Activated CD4-positive, alpha-beta T cell treated with anti-CD3 and anti-CD28 coated beads for 36 hours (primary cell): ENCODE measurements at regions of chr1 and their contacts with region 1.

Region 1: GRCh38 chr1:10941891-10942541 is 70.4 kb upstream of the TARDBP start:
- DNase-seq: peak; percentile 77
- ATAC-seq: no peak
- H3K4me3 Mint-ChIP-seq: no peak overlapping the region
- H3K27ac Mint-ChIP-seq: no peak overlapping the region
- H3K4me1 Mint-ChIP-seq: peaks cover 34% of the 10 kb centered on the region
- H3K27me3 Mint-ChIP-seq: peaks cover 53% of the 10 kb centered on the region

Region 2: DNA sequence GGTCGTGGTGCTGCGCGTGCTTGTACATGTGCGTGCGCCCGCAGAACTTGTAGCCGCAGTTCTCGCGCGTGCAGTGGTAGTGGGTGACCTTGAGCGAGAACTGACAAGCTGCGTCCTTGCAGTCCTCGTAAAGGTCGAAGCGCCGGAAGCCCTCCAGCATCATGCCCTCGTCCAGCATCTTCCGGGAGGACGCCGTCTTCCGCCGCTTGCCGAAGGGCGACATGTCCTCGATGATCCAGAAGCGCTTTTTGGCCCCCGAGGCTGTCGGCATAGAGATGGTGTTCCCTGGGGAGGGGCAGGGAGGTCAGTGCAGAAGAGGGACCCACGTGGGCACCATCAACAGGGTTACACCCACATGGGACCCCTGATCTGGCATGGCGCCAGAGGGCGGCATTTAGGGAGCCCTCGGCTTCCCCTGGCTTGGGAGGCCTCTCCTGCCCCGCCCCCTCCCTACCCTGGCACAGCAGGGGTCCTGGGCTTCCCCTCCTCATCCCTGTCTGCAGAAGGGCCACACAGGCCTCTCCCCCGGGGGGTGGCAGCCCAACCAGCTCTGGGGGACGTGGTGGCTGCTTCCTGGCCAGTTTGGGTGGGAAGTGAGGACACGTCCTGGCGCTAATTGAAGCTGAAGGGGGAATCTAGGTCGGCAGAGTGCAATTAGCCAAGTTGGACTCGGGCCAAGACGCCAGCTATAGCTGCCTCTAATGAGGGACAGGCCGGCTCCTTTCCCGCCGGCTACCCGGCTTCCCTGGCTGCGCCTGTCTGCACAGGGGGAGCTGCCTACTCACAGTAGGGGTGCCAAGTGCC is 302.0 kb before region 1 on chr1:
- CTCF ChIA-PET with region 1: no interaction called
- POLR2A ChIA-PET with region 1: no interaction called
- intact Hi-C with region 1: loop called in 1 of 2 experiments (anchors 2 kb)
- DNase-seq: no peak
- ATAC-seq: no peak
- H3K4me3 Mint-ChIP-seq: no peak overlapping the region
- H3K27ac Mint-ChIP-seq: no peak overlapping the region
- H3K4me1 Mint-ChIP-seq: peaks cover 1% of the 10 kb centered on the region
- H3K27me3 Mint-ChIP-seq: peaks cover 2% of the 10 kb centered on the region

Region 3: DNA sequence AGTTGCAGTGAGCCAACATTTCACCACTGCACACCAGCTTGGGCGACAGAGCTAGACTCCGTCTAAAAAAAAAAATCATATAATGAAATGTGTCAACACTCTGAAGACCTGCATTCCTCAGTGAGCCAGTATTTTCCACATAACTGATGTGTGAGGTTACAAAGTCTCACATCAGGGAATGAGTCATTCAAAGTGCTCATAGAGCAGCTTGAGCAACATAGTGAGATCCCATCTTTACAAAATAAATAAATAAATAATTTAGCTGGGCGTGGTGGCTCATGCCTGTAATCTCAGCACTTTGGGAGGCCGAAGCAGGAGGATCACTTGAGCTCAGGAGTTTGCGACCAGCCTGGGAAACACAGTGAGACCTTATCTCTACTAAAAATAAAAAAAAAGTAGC is 211.0 kb before region 1 on chr1:
- CTCF ChIA-PET with region 1: no interaction called
- POLR2A ChIA-PET with region 1: no interaction called
- intact Hi-C with region 1: loop called in 1 of 2 experiments (anchors 1 kb)
- DNase-seq: peak; percentile 29
- ATAC-seq: peak; percentile 63
- H3K4me3 Mint-ChIP-seq: no peak overlapping the region
- H3K27ac Mint-ChIP-seq: no peak overlapping the region
- H3K4me1 Mint-ChIP-seq: peaks cover 20% of the 10 kb centered on the region
- H3K27me3 Mint-ChIP-seq: no peaks in the 10 kb centered on the region

Region 4: GRCh38 chr1:10867138-10867721 is 74.8 kb before region 1 on chr1:
- CTCF ChIA-PET with region 1: no interaction called
- POLR2A ChIA-PET with region 1: no interaction called
- intact Hi-C with region 1: loop called in 1 of 2 experiments (anchors 1 kb)
- DNase-seq: peak; percentile 77
- ATAC-seq: peak; percentile 84
- H3K4me3 Mint-ChIP-seq: peak overlapping the region; percentile 43
- H3K27ac Mint-ChIP-seq: no peak overlapping the region
- H3K4me1 Mint-ChIP-seq: peaks cover 12% of the 10 kb centered on the region
- H3K27me3 Mint-ChIP-seq: peaks cover 51% of the 10 kb centered on the region

Region 5: DNA sequence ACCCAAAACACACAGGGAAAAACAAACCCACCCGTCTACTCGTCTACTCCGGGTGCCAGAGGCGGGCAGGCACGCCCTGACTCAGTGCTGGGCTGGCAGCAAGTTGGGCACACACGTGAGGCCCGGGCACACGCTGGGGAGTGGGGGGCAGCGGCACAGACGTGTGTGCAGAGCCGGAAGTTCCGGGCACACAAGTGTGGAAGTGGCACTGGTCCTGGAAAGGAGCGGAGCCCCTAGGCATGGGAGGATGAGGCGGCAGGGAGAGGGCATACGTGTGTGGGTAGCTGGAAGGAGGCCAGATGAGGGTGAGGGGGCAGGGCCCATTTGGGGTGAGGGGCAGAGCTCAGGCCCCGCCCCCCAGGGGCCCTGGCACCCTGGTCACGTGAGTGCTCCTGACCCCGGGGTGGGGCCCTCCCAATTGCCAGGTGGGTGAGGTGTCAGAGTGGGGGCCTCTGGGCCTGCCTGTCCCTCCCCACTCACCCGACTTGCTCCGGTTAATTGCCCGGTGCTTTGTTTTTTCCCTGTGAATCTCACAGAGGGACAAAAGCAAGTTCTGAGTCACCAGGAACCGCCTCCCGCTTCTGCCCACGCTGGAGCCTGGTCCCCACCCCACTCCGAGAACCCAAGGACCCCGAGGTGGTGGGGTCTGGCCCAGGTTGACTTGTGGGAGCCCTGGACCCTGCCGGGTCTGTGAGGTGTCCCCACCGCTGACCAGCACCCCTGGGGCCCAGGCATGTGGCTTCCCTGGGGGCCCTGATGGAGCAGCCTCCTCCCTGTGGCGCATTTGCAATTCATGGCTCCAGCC is 40.7 kb before region 1 on chr1:
- CTCF ChIA-PET with region 1: no interaction called
- POLR2A ChIA-PET with region 1: no interaction called
- intact Hi-C with region 1: loop called in 1 of 2 experiments (anchors 5 kb)
- DNase-seq: no peak
- ATAC-seq: no peak
- H3K4me3 Mint-ChIP-seq: no peak overlapping the region
- H3K27ac Mint-ChIP-seq: no peak overlapping the region
- H3K4me1 Mint-ChIP-seq: peaks cover 20% of the 10 kb centered on the region
- H3K27me3 Mint-ChIP-seq: peaks cover 1% of the 10 kb centered on the region

Region 6: GRCh38 chr1:11355559-11356475 is 413.8 kb after region 1 on chr1:
- CTCF ChIA-PET with region 1: no interaction called
- POLR2A ChIA-PET with region 1: no interaction called
- intact Hi-C with region 1: no loop called
- DNase-seq: no peak
- ATAC-seq: no peak
- H3K4me3 Mint-ChIP-seq: no peak overlapping the region
- H3K27ac Mint-ChIP-seq: no peak overlapping the region
- H3K4me1 Mint-ChIP-seq: peaks cover 12% of the 10 kb centered on the region
- H3K27me3 Mint-ChIP-seq: peaks cover 8% of the 10 kb centered on the region

Region 7: GRCh38 chr1:11458811-11459275 is 516.8 kb after region 1 on chr1:
- CTCF ChIA-PET with region 1: no interaction called
- POLR2A ChIA-PET with region 1: no interaction called
- intact Hi-C with region 1: no loop called
- DNase-seq: no peak
- ATAC-seq: no peak
- H3K4me3 Mint-ChIP-seq: no peak overlapping the region
- H3K27ac Mint-ChIP-seq: no peak overlapping the region
- H3K4me1 Mint-ChIP-seq: peaks cover 18% of the 10 kb centered on the region
- H3K27me3 Mint-ChIP-seq: no peaks in the 10 kb centered on the region